H1 (cell line): ENCODE measurements at regions of chr1 and their contacts with region 1.

Region 1: DNA sequence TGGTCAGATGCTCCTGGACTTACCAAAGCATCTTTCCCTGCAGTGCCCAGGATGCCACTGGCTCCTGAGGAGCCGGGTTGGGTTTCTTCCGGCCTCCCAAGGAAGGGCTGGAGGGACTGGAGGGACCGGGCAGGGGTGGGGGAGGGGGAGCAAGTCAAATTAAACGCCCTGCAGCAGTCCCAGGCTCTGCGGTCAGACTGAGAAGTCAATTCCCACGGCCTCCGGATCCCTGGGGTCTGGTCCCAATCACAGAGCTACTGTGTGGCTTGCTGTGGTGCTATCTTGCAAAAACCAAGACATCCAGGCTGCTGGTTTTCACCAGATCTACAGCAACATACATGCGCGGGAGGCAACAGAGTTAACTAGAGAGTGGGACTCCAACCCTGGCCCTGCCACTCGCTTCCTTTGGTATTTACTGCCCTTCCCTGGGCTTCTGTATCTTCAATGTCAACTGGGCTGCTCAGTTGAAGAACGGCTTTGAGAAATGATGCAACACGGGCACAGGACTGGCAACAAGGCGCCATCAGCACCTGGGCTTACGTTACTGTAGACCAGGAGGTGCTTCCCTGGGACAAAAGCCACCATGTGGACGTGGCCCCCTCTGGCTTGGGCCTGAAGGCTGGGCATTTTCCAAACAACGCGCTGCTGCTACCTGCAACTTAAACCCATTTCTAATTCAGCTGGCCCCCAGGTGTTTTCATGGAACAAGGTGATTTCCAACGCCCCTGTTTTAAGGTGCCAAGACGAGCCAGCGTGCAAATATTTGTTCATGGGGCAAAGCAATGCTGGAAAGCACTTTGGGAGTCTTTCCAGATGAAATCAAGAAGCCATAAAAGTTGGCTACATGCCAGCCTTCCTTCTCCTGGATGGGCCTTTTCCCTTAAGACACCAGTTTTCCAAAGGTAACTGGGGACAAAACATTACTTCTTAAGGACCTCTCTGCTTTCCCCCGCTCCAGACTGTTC is 11.5 kb downstream of the RCC2 start:
- DNase-seq: no peak
- H3K4me3 ChIP-seq: no peak overlapping the region
- H3K27ac ChIP-seq: 0 out of 2 replicates have a peak overlapping the region, but pooled peaks have one; percentile 29
- H3K4me1 ChIP-seq: peaks cover 2 to 21% (median 15%) of the 10 kb centered on the region in 4 experiments
- H3K27me3 ChIP-seq: no peaks in the 10 kb centered on the region
- CTCF ChIP-seq: no peak
- EP300 ChIP-seq: no peak
- POLR2A ChIP-seq: peak; percentile 15 to 45; a peak in 1 of 3 replicates
- RAD21 ChIP-seq: no peak

Region 2: DNA sequence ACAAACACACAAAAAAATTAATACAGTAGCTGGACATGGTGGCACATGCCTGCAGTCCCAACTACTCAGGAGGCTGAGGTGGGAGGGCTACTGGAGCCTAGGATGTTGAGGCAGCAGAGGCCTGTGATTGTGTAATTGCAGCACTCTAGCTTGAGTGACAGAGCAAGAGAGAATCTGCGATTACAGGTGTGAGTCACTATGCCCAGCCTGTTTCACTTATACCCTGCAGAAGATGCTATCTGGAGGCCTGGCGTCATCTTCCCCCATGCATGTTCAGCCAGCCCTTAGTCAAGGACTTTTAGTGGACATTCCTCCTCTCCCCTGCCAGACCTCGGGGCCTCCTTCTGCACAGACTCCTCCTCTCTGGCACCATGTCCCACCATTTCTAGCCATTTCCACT is 47.8 kb after region 1 on chr1:
- CTCF ChIA-PET with region 1: interaction called, 4 read pairs
- POLR2A ChIA-PET with region 1: interaction called, 155 read pairs
- DNase-seq: no peak
- H3K4me3 ChIP-seq: no peak overlapping the region
- H3K27ac ChIP-seq: no peak overlapping the region
- H3K4me1 ChIP-seq: peaks cover 0 to 7% (median 2%) of the 10 kb centered on the region in 4 experiments; a peak in 4 of 7 replicates
- H3K27me3 ChIP-seq: no peaks in the 10 kb centered on the region
- CTCF ChIP-seq: no peak
- EP300 ChIP-seq: no peak
- POLR2A ChIP-seq: no peak
- RAD21 ChIP-seq: no peak